HAP-1 (cell line): ENCODE measurements at regions of chr6 and their contacts with region 1.

Region 1: GRCh38 chr6:3987053-3987452 is 91.9 kb downstream of the FAM217A start:
- DNase-seq: no peak
- H3K4me3 ChIP-seq: no peak overlapping the region
- H3K4me1 ChIP-seq: peaks cover 13% of the 10 kb centered on the region
- H3K27me3 ChIP-seq: no peaks in the 10 kb centered on the region

Region 2: GRCh38 chr6:3269281-3269975 is 717.6 kb before region 1 on chr6:
- in situ Hi-C with region 1: loop called (anchors 10 kb)
- DNase-seq: no peak
- H3K4me3 ChIP-seq: no peak overlapping the region
- H3K4me1 ChIP-seq: no peaks in the 10 kb centered on the region
- H3K27me3 ChIP-seq: no peaks in the 10 kb centered on the region

Region 3: DNA sequence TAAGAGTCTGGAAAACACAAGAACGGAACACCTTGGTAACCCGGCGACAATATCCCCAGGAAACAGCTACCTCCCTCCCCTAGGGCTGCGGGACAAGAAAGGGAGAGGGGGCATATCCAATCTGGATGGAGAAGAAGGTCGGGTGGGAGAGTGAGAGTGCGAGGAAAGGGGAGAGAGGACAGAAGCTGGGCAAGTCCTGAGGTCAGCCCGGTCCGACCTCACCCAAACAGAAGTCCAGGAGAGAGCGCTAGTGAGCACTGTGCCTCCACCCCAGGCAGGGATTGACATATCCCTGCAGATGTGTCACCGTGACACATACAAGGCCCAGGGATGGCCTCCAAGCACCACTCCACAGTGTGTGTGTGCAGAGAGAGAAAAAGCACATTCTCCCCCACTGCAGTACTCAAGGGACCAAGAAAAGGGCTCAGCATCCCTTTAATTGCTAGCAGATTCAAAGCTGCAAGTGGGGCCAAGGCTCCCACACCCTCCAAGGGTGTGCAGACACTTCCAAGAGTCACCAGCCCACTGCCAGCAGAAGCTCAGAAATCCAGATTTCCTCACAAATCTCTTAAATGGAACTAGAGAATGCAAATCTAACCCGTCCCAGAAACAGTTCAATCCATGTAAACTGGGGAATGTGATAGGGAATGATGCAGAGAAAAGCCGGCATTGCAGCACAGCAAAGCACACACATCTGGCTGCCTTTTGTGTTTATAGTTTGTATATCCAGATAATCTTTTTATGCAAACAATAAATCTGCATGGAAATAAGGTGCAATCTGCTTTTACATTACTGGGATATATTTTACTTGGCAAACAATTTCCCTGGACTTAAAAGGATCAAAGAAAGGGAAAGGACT is 238.6 kb before region 1 on chr6:
- in situ Hi-C with region 1: loop called (anchors 5 kb)
- DNase-seq: peak; percentile 44 to 80
- H3K4me3 ChIP-seq: no peak overlapping the region
- H3K4me1 ChIP-seq: peaks cover 11% of the 10 kb centered on the region
- H3K27me3 ChIP-seq: no peaks in the 10 kb centered on the region